Lower leg skin (tissue), 4 donors: ENCODE measurements at regions of chr13 and their contacts with region 1.

Region 1: GRCh38 chr13:62320129-62321108 is 904.8 kb upstream of the PCDH20 start:
- DNase-seq: no peak
- H3K4me3 ChIP-seq: no peak overlapping the region
- CTCF ChIP-seq: no peak
- POLR2A ChIP-seq: no peak

Region 2: GRCh38 chr13:62875118-62875640 is 554.8 kb after region 1 on chr13:
- intact Hi-C with region 1: no loop called
- DNase-seq: no peak
- H3K4me3 ChIP-seq: no peak overlapping the region
- CTCF ChIP-seq: no peak
- POLR2A ChIP-seq: no peak

Region 3: DNA sequence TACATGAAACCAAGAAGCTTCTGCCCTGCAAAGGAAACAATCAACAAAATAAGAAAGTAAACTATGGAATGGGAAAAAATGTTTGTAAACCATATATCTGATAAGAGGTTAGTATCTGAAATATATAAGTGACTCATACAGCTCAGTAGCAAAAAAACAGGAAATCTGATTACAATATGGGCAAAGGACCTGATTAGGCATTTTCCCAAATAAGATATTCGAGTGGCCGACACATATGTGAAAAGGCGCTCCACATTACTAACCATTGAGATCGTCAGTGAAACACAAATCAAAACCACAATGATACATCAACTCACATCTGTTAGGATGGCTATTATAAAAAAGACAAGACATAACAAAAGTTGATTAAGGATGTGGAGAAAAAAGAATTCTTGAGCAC is 1913.8 kb after region 1 on chr13:
- intact Hi-C with region 1: loop called (anchors 5 kb)
- DNase-seq: no peak
- H3K4me3 ChIP-seq: no peak overlapping the region
- CTCF ChIP-seq: no peak
- POLR2A ChIP-seq: no peak